ENCODE measurements at regions of chr3 and their contacts with region 1.

Region 1: GRCh38 chr3:147407114-147407497 is 763 bp upstream of the ZIC4 start:
- DNase-seq: no peak
- H3K4me3 ChIP-seq: no peak overlapping the region
- H3K27ac ChIP-seq: no peak overlapping the region
- H3K27me3 ChIP-seq: peaks cover 94% of the 10 kb centered on the region
- CTCF ChIP-seq: no peak

Region 2: DNA sequence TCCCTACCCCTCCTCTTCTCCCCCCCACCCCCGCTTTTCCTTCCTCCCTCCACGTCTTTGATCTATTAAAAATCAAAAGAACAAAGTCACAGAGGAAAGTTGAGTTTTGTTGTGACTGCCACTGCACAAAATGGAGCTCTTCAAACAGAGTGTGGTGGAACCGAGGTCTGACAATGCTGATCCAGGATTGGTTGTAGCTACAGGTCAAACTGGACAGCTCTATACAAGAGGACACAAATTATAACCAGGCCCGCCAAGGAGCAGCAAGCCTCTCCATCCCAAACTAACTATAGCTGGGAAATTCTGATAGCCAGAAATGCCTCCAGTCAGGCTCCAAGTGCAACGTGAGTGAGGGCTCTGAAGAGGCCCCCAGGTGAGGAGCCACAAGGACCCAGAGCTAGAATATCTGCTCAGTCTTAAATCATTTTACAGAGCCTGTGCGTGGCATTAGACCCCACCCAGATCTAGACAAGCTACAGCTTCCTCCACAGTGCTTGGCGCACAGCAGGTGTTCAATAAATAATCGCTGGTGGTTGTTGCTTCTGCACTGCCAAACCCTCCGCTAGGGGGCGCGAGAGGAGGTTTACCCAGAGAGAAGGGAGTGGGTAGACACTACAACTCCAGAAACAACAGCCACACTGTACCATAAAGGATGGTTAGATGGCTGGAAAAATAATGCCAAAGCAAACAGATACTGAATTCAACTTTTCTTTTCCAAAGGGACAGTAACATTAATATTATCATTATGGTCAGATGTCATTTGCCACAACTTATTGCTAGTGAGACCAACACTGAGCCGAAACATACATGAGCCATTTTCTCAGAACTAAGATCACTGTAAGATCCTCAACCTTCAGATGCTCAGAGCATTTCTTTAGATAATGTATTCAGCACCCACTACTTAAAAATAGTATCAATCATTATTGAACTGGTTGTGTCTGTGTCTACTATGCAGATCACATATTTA is 45.4 kb before region 1 on chr3:
- CTCF ChIA-PET with region 1: interaction called, 15 read pairs
- POLR2A ChIA-PET with region 1: no interaction called
- DNase-seq: no peak
- H3K4me3 ChIP-seq: no peak overlapping the region
- H3K27ac ChIP-seq: no peak overlapping the region
- H3K27me3 ChIP-seq: peaks cover 79% of the 10 kb centered on the region
- CTCF ChIP-seq: peak; percentile 47

Region 3: DNA sequence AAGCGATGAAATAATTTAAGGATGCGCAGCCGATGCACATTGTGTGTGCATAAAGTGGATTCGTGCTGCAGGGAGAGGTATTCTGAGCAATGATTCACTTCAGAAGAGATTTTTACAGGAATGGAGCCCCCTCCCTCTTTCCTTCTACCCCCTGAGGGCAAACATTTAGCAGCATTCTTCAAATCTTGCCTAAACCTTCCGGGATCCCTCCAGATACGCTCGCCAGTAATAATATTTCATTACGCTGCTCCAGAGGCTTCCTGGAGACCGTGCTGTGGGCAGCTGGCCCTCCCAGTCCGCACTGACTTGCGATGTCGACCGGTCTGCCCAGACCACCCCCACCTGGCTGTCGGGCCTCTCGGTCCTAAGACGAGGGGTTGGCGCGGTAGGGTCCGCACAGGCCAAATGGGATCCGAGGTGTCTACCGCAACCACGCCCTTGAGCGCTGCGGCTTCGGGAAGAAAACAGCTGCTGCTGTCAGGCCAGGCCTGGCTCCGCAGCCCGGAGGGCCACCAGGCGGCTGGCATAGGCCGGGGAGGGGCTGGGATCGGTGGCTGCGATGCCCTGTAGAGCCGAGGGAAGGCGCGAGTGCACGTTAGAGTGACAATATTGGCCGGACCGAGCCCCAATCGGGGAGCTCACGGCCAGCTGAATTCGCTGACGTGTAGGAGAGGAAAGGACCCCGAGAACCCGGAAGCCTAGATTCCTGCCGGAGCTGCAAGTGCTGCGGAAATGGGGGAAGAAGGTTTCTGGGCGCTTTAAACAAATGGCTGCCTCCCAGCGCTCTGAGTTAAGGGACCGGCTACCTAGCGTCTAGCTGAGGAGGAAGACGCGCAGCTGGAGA is 15.1 kb before region 1 on chr3:
- CTCF ChIA-PET with region 1: no interaction called
- POLR2A ChIA-PET with region 1: no interaction called
- DNase-seq: no peak
- H3K4me3 ChIP-seq: peak overlapping the region; percentile 32
- H3K27ac ChIP-seq: no peak overlapping the region
- H3K27me3 ChIP-seq: peaks cover 97% of the 10 kb centered on the region
- CTCF ChIP-seq: no peak

Region 4: DNA sequence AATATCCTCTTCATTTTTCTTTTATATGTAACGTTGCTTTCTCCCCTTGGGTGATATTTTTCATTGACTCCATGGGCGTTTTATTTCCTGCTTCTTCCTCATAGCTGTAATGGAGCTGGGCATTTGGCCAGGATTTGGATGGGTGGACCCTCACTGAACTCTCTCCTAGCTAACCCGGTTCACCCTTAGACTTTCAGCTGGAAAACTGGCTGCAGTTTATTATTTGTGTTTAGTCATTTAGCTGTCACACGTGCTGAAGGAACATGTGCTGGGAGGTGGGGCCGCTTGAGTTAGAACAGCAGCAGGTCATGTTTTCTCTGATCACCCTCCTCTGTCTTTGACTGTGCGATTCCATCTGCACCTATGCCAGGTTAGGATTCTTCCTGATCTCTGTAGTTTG is 409.7 kb after region 1 on chr3:
- CTCF ChIA-PET with region 1: no interaction called
- POLR2A ChIA-PET with region 1: no interaction called
- DNase-seq: no peak
- H3K4me3 ChIP-seq: no peak overlapping the region
- H3K27ac ChIP-seq: no peak overlapping the region
- H3K27me3 ChIP-seq: no peaks in the 10 kb centered on the region
- CTCF ChIP-seq: no peak